Activated T-helper 1 cell treated with anti-CD3 and anti-CD28 coated beads, Interleukin-12 subunit alpha, Interleukin-12 subunit beta, Interleukin-2, Interleukin-4 antibody, amounts not matched to agents 30 ng/mL and 10 ng/mL and 1 ng/mL, durations not matched to agents 14 hours and 24 hours and 36 hours (primary cell): ENCODE measurements at regions of chr14 and their contacts with region 1.

Region 1: DNA sequence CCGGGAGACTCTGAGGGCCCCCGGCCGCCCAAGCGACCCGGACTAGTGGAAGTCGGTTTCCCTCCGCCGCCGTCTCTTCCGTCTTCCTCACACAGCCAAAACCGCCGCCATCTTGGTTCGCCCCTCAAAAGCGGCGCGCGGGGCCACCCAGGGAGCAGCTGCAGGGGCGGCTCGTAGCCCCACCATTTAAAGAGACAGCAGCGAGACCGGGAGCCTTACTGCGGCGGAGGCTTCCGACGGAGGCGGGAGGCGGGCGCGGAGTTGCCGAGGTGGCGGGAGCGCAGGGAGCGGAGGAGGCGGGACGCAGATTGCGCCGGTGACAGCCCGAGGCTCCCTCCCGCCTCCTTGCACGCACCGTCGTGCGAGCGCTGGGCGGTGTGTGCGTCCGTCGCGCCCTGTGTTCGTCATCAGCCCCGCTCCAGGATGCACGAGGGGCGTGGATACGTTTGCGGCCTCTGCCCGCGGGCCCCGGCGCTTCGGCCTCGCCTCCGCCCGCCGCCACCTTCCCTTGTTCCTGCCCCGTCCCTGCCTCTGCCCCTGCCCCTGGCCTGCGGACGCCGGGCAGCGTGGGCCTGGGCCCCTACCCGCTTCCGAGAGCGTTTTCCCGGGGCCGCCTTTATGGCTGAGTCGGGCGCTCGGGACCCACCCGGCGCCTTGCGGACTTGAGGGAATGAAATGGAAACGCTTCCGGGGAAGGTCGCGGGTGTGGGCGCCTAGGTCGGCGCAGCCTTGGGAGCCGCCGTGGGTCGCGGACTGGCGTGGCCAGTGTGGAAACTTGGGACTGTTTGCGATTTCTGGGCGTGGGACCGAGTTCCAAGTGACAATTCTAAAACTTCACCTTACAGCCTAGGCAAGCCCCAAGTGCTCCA is at the start of gene PPP4R3A:
- DNase-seq: peak; percentile 91
- H3K4me3 Mint-ChIP-seq: peak within 1 kb of the TSS; percentile 98
- H3K27ac Mint-ChIP-seq: peak within 1 kb of the TSS; percentile 100
- H3K4me1 Mint-ChIP-seq: peaks cover 29% of the 10 kb centered on the region
- H3K27me3 Mint-ChIP-seq: peaks cover 5% of the 10 kb centered on the region
- total RNA-seq, gene PPP4R3A: 130 and 144 TPM in 2 replicates

Region 2: DNA sequence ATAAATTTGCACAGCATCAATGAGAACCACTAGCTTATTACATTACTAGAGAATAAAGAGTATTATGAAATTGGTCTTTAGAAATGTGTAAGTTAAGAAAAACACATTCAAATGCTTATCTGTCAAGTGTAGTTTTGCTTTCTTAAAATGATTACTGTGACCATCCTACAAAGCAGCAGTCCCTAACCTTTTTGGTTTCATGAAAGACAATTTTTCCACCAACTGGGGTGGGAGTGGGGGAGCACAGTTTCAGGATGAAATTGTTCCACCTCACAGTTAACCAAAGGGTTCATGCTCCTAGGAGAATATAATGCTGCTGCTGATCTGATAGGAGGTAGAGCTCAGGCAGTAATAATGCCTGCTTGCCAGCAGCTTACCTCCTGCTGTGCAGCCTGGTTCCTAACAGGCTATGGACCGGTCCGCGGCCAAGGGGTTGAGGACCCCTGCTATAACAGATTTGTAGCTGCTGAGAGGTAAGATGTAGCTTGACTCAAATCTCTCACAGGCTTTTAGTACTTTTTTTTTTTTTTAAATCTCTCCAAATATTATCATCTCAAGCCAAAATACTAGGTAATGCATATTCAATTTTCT is 45.7 kb before region 1 on chr14:
- intact Hi-C with region 1: loop called (anchors 2 kb)
- DNase-seq: no peak
- H3K4me3 Mint-ChIP-seq: no peak overlapping the region
- H3K27ac Mint-ChIP-seq: peak overlapping the region; percentile 81
- H3K4me1 Mint-ChIP-seq: peaks cover 20% of the 10 kb centered on the region
- H3K27me3 Mint-ChIP-seq: no peaks in the 10 kb centered on the region

Region 3: GRCh38 chr14:91836119-91836881 is 325.9 kb after region 1 on chr14:
- intact Hi-C with region 1: loop called (anchors 1 kb)
- DNase-seq: peak; percentile 49
- H3K4me3 Mint-ChIP-seq: peak overlapping the region; percentile 85
- H3K27ac Mint-ChIP-seq: no peak overlapping the region
- H3K4me1 Mint-ChIP-seq: peaks cover 67% of the 10 kb centered on the region
- H3K27me3 Mint-ChIP-seq: no peaks in the 10 kb centered on the region

Region 4: DNA sequence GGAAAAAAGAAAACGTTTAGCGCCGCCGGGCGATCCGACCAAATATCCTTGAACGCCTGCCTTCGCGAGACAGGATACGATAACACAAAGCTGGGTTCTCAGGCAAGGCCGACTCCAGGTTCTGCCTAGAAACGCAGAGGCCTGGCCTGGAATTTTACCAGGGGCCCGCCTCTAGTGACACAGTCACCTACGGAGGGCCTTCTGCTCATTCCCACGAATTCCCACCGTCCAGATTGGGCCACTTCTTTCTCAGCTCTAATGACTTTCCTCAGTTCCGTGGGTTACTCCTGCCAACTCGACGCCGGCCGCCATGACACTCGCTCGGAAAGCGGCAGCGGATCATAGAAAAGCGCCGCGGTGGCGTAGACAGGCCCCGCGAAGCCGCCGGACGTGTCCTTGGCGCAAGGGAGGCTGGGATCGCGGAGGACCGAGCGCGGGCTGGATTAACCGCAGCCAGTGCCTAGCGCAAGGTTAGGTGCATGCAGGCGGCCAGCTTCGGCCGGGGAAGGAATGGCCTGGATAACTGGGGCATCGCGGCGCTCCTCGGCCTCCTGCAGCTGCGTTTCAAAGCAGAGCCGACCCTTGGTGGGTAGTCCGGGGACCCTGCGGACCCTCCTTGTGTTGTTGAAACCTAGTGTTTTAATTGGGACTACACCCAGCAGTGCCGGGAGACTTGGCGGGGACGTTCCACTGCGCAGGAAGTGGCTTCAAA is 529.5 kb after region 1 on chr14 and contains the start of gene TRIP11:
- intact Hi-C with region 1: loop called (anchors 1 kb)
- DNase-seq: peak; percentile 94
- H3K4me3 Mint-ChIP-seq: peak within 1 kb of the TSS; percentile 93
- H3K27ac Mint-ChIP-seq: peak within 1 kb of the TSS; percentile 98
- H3K4me1 Mint-ChIP-seq: peaks cover 38% of the 10 kb centered on the region
- H3K27me3 Mint-ChIP-seq: no peaks in the 10 kb centered on the region
- total RNA-seq, gene TRIP11: 36.5 and 44.4 TPM in 2 replicates

Region 5: GRCh38 chr14:92121670-92122350 is 611.4 kb after region 1 on chr14 and contains the starts of genes CPSF2 and NDUFB1:
- intact Hi-C with region 1: loop called (anchors 5 kb)
- DNase-seq: peak; percentile 80
- H3K4me3 Mint-ChIP-seq: peak within 1 kb of the TSS; percentile 97
- H3K27ac Mint-ChIP-seq: peak within 1 kb of the TSS; percentile 100
- H3K4me1 Mint-ChIP-seq: peaks cover 29% of the 10 kb centered on the region
- H3K27me3 Mint-ChIP-seq: no peaks in the 10 kb centered on the region
- total RNA-seq, gene CPSF2: 103 and 104 TPM in 2 replicates
- total RNA-seq, gene NDUFB1: 73.3 and 83.5 TPM in 2 replicates